ENCODE measurements at regions of chr1 and their contacts with region 1.

Region 1: GRCh38 chr1:221203224-221204054 is 324.2 kb downstream of the HLX start:
- DNase-seq: peak; percentile 94
- H3K4me3 Mint-ChIP-seq: no peak overlapping the region
- H3K27ac Mint-ChIP-seq: no peak overlapping the region
- H3K4me1 Mint-ChIP-seq: peaks cover 6% of the 10 kb centered on the region
- H3K27me3 Mint-ChIP-seq: no peaks in the 10 kb centered on the region
- CTCF ChIP-seq: peak; percentile 99

Region 2: DNA sequence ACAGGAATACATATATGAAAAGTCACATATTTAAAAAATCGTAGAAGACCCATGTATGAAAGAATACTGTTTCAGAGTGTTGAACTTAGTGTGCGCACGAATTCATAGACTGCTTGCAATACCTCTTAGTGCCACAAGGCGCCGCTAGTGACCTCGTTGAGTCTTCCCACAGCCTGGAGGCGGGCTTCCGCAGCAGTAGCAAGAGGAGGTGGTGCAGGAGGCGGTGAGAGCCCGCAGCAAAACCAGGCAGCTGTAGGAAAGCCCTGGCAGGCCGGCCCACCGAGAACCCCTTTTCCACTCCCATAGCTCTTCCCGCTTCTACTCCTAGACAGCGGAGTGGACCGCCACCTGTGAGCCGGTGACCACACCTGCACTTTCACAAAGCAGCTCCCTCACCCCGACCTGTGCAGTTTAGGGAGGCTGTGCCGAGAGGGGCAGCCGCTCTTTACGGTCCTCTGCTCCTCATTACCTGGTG is 393.2 kb before region 1 on chr1:
- CTCF ChIA-PET with region 1: interaction called, 43 read pairs
- POLR2A ChIA-PET with region 1: interaction called, 3 read pairs
- intact Hi-C with region 1: loop called (anchors 1 kb)
- DNase-seq: peak; percentile 91
- H3K4me3 Mint-ChIP-seq: no peak overlapping the region
- H3K27ac Mint-ChIP-seq: no peak overlapping the region
- H3K4me1 Mint-ChIP-seq: no peaks in the 10 kb centered on the region
- H3K27me3 Mint-ChIP-seq: no peaks in the 10 kb centered on the region
- CTCF ChIP-seq: peak; percentile 99

Region 3: DNA sequence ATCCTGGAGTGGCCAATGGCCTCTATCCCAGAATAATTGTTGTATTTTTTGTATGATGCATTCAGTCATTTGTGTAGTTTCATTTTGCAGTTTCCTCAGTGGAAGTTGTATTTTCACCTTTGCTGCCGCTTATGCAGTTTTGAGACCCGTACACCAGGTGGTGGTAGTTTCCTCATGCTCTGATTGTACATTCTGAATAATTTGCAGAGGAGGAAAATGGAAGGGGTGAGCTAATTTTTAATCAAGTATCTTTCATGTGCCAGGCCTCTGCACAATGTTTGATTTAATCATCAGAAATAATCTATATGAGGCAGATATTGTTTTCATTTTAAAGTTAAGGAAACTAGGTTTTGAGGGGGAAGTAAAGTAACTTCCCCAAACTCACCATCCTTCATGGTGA is 294.7 kb before region 1 on chr1:
- CTCF ChIA-PET with region 1: interaction called, 48 read pairs
- POLR2A ChIA-PET with region 1: interaction called, 4 read pairs
- intact Hi-C with region 1: loop called (anchors 1 kb)
- DNase-seq: peak; percentile 56
- H3K4me3 Mint-ChIP-seq: no peak overlapping the region
- H3K27ac Mint-ChIP-seq: no peak overlapping the region
- H3K4me1 Mint-ChIP-seq: peaks cover 21% of the 10 kb centered on the region
- H3K27me3 Mint-ChIP-seq: no peaks in the 10 kb centered on the region
- CTCF ChIP-seq: peak; percentile 58

Region 4: GRCh38 chr1:221078260-221078965 is 125.0 kb before region 1 on chr1:
- CTCF ChIA-PET with region 1: no interaction called
- POLR2A ChIA-PET with region 1: no interaction called
- intact Hi-C with region 1: no loop called
- DNase-seq: peak; percentile 47
- H3K4me3 Mint-ChIP-seq: no peak overlapping the region
- H3K27ac Mint-ChIP-seq: no peak overlapping the region
- H3K4me1 Mint-ChIP-seq: peaks cover 7% of the 10 kb centered on the region
- H3K27me3 Mint-ChIP-seq: no peaks in the 10 kb centered on the region
- CTCF ChIP-seq: no peak

Region 5: GRCh38 chr1:221117548-221117951 is 85.9 kb before region 1 on chr1:
- CTCF ChIA-PET with region 1: interaction called, 13 read pairs
- POLR2A ChIA-PET with region 1: interaction called, 3 read pairs
- intact Hi-C with region 1: no loop called
- DNase-seq: peak; percentile 73
- H3K4me3 Mint-ChIP-seq: no peak overlapping the region
- H3K27ac Mint-ChIP-seq: peak overlapping the region; percentile 3
- H3K4me1 Mint-ChIP-seq: peaks cover 17% of the 10 kb centered on the region
- H3K27me3 Mint-ChIP-seq: no peaks in the 10 kb centered on the region
- CTCF ChIP-seq: no peak

Region 6: GRCh38 chr1:221187174-221187573 is 16.3 kb before region 1 on chr1:
- CTCF ChIA-PET with region 1: interaction called, 32 read pairs
- POLR2A ChIA-PET with region 1: no interaction called
- intact Hi-C with region 1: no loop called
- DNase-seq: no peak
- H3K4me3 Mint-ChIP-seq: no peak overlapping the region
- H3K27ac Mint-ChIP-seq: no peak overlapping the region
- H3K4me1 Mint-ChIP-seq: peaks cover 7% of the 10 kb centered on the region
- H3K27me3 Mint-ChIP-seq: no peaks in the 10 kb centered on the region
- CTCF ChIP-seq: no peak

Region 7: DNA sequence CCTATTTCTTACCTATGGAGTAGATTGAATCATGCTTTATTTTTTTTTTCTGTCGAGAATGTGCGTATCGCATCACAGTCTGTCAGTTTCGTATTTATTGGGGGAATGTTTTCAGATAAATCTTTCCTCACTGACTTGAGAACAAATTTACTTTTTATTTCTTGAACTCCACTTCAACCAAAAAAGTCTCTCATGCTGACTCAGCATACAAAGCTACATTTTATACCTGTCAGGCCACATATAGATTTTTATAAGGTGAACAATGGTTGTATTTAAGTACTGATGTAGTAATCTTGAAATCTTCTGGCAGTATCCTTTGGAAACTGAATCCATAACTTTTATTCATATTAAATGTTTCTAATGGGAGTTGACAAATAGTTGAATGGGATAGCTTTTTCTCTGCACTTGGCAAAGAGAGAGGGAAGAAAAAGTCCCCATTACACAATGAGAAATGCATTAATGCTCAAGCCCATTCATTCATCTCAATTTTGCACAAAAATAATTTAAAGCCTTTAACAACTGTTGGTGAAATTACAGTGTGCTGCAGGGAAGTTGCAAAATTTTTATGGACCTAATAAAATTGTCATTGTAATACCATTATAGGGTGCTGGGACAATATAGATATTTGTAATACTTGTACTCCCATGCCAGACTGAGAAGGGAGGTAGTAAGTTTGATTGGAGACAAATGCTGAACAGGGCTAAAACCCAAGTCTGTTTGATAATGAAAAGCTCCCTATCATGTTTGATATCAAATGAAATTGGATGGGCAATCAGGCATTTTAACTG is 43.4 kb after region 1 on chr1:
- CTCF ChIA-PET with region 1: interaction called, 11 read pairs
- POLR2A ChIA-PET with region 1: no interaction called
- intact Hi-C with region 1: no loop called
- DNase-seq: no peak
- H3K4me3 Mint-ChIP-seq: no peak overlapping the region
- H3K27ac Mint-ChIP-seq: no peak overlapping the region
- H3K4me1 Mint-ChIP-seq: no peaks in the 10 kb centered on the region
- H3K27me3 Mint-ChIP-seq: no peaks in the 10 kb centered on the region
- CTCF ChIP-seq: no peak

Region 8: DNA sequence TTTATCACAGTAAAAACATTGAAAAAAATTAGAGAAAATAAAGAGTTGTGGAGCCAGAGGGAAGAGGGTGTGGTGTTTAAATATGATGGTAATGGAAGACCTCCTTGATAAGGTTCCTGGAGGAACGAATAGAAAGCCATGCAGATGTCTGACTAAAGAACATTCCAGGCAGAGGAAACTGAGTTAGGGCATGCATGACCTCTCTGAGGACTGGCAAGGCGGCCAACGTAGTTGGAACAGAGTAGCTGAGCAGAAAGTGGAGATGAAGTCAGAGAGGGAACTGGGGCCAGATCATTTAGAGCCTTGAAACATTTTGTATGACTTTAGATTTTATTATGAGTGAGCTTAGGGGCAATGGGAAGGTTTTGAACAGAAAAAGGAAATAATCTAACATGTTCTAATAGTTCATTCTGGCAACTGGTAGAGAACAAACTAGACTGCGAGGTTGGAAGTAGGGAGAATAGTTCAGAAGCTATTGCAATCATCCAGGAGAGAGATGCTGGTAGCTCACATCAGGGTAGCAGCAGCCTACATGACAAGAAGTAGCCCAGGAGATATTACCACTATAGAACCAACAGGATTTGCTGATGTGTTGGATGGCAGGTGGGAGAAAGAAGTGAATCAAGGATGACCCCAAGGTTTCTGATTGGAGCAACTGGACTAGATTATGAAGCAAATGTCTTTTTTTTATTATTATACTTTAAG is 53.5 kb after region 1 on chr1:
- CTCF ChIA-PET with region 1: no interaction called
- POLR2A ChIA-PET with region 1: no interaction called
- intact Hi-C with region 1: no loop called
- DNase-seq: no peak
- H3K4me3 Mint-ChIP-seq: no peak overlapping the region
- H3K27ac Mint-ChIP-seq: no peak overlapping the region
- H3K4me1 Mint-ChIP-seq: no peaks in the 10 kb centered on the region
- H3K27me3 Mint-ChIP-seq: no peaks in the 10 kb centered on the region
- CTCF ChIP-seq: no peak

Measured in MCF 10A (cell line).